Colonic mucosa (tissue), 4 donors: ENCODE measurements at regions of chr15 and their contacts with region 1.

Region 1: DNA sequence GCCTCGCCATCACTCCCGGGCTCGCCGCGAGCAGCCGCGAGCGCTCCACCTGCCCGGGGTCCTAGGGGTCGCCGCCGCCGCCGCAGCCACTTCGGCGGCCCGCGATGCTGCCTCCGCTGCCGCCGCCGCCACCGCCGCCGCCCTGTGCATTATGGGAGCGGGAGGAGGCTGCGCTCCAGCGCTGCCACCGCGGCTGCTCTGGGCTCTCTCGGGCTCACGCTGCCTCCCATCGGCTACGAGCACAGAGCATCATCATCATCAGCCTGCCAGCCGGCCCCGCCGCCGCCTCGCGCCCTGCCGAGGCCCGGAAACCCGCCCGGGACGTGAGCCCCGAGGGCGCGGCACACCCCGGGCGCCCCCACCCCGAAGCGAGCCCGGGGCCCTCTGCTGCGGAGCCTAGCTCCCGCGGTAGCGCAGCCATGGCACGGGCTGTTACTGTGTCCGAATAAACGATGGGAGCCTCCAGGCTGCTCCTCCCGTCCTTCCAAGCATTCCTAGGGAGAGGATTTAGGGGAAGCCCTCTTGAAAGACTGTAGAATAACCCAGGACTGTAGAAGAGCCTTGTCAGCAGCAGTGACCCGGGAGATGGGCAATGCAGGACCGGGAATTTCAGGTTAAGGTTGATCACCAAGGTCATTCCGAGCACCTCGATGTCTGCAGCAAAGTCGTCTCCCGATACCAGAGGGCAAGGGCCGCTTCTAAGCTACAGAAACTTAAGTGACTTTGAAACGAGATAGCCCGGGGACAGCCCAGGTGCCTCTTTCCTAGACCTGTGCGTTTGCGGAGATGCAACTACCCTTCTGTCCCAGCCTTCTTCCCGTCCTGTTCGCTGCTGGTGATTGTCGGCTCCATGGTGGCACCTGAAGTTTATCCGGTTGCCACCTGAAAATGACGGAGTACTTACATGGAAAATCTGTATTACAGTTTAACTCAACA is 579 bp upstream of the MYO5A start:
- DNase-seq: peak; percentile 54
- H3K4me3 ChIP-seq: peak overlapping the region; percentile 69
- H3K27ac ChIP-seq: peak overlapping the region; percentile 52
- H3K4me1 ChIP-seq: peaks cover 3% of the 10 kb centered on the region
- H3K27me3 ChIP-seq: peaks cover 31% of the 10 kb centered on the region
- CTCF ChIP-seq: no peak

Region 2: DNA sequence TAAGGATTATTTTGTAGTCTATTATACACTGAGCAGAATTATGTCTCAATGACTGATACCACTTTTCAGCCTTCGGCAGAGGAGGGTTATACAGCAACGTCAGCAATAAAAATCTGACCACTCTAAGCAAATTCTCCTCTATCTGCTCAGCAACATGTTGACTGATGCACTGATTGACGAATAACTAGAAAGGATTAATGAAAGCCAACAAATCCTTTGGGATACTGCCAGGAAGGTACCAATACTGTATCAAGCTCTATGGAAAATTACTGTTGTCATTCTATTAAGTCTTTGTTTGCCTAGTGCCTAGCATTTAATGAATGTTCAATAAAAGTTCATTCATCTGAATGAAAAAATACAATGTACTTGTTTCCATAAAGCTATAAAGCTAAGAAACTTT is 34.3 kb after region 1 on chr15:
- intact Hi-C with region 1: loop called (anchors 5 kb)
- DNase-seq: no peak
- H3K4me3 ChIP-seq: no peak overlapping the region
- H3K27ac ChIP-seq: no peak overlapping the region
- H3K4me1 ChIP-seq: no peaks in the 10 kb centered on the region
- H3K27me3 ChIP-seq: no peaks in the 10 kb centered on the region
- CTCF ChIP-seq: no peak